Mammary epithelial cell (primary cell): ENCODE measurements at regions of chr19 and their contacts with region 1.

Region 1: GRCh38 chr19:53511933-53512374 is 26.0 kb upstream of the ZNF331 start:
- DNase-seq: peak; percentile 43
- H3K4me3 ChIP-seq: no peak overlapping the region
- H3K27ac ChIP-seq: no peak overlapping the region
- H3K4me1 ChIP-seq: no peaks in the 10 kb centered on the region
- H3K27me3 ChIP-seq: no peaks in the 10 kb centered on the region
- CTCF ChIP-seq: peak; percentile 33 to 65

Region 2: GRCh38 chr19:53424968-53425597 is 86.9 kb before region 1 on chr19:
- CTCF ChIA-PET with region 1: no interaction called
- dilution Hi-C with region 1: no loop called
- in situ Hi-C with region 1: no loop called
- intact Hi-C with region 1: loop called (anchors 1 kb)
- DNase-seq: peak; percentile 35
- H3K4me3 ChIP-seq: no peak overlapping the region
- H3K27ac ChIP-seq: no peak overlapping the region
- H3K4me1 ChIP-seq: no peaks in the 10 kb centered on the region
- H3K27me3 ChIP-seq: no peaks in the 10 kb centered on the region
- CTCF ChIP-seq: peak; percentile 55 to 80